MCF 10A (cell line): ENCODE measurements at regions of chr3 and their contacts with region 1.

Region 1: GRCh38 chr3:35664460-35664919 is 25.2 kb downstream of the ARPP21 start:
- DNase-seq: no peak
- H3K4me3 Mint-ChIP-seq: no peak overlapping the region
- H3K27ac Mint-ChIP-seq: no peak overlapping the region
- H3K4me1 Mint-ChIP-seq: no peaks in the 10 kb centered on the region
- H3K27me3 Mint-ChIP-seq: peaks cover 84% of the 10 kb centered on the region
- CTCF ChIP-seq: no peak

Region 2: GRCh38 chr3:34619990-34620389 is 1044.5 kb before region 1 on chr3:
- CTCF ChIA-PET with region 1: no interaction called
- POLR2A ChIA-PET with region 1: no interaction called
- intact Hi-C with region 1: loop called (anchors 1 kb)
- DNase-seq: peak; percentile 27
- H3K4me3 Mint-ChIP-seq: no peak overlapping the region
- H3K27ac Mint-ChIP-seq: no peak overlapping the region
- H3K4me1 Mint-ChIP-seq: no peaks in the 10 kb centered on the region
- H3K27me3 Mint-ChIP-seq: peaks cover 68% of the 10 kb centered on the region
- CTCF ChIP-seq: peak; percentile 12

Region 3: DNA sequence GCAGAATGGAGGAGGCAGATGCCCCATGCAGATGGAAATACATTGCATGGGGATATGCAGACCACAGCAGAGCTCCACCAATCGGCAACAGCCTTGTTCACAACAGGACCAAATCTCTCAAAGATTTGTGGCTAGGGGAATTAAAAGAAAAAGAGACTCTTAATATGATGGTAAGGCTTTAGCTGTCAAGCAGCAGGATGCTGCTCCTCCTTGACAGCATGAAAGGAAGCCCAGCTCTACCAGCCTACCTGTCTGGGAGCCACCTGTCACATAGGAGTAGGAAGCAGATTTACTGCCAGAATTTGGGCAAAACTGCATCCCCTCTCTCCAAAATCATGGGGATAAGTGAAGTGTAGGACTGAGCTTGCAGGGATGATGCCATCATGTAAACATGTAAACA is 794.8 kb before region 1 on chr3:
- CTCF ChIA-PET with region 1: no interaction called
- POLR2A ChIA-PET with region 1: no interaction called
- intact Hi-C with region 1: no loop called
- DNase-seq: no peak
- H3K4me3 Mint-ChIP-seq: no peak overlapping the region
- H3K27ac Mint-ChIP-seq: no peak overlapping the region
- H3K4me1 Mint-ChIP-seq: no peaks in the 10 kb centered on the region
- H3K27me3 Mint-ChIP-seq: peaks cover 10% of the 10 kb centered on the region
- CTCF ChIP-seq: no peak

Region 4: GRCh38 chr3:34882764-34883163 is 781.7 kb before region 1 on chr3:
- CTCF ChIA-PET with region 1: no interaction called
- POLR2A ChIA-PET with region 1: no interaction called
- intact Hi-C with region 1: loop called (anchors 5 kb)
- DNase-seq: peak; percentile 11
- H3K4me3 Mint-ChIP-seq: no peak overlapping the region
- H3K27ac Mint-ChIP-seq: no peak overlapping the region
- H3K4me1 Mint-ChIP-seq: no peaks in the 10 kb centered on the region
- H3K27me3 Mint-ChIP-seq: peaks cover 23% of the 10 kb centered on the region
- CTCF ChIP-seq: peak; percentile 44

Region 5: GRCh38 chr3:36257158-36257852 is 592.8 kb after region 1 on chr3:
- CTCF ChIA-PET with region 1: no interaction called
- POLR2A ChIA-PET with region 1: no interaction called
- intact Hi-C with region 1: no loop called
- DNase-seq: no peak
- H3K4me3 Mint-ChIP-seq: no peak overlapping the region
- H3K27ac Mint-ChIP-seq: no peak overlapping the region
- H3K4me1 Mint-ChIP-seq: no peaks in the 10 kb centered on the region
- H3K27me3 Mint-ChIP-seq: no peaks in the 10 kb centered on the region
- CTCF ChIP-seq: no peak